ENCODE measurements at regions of chr5 and their contacts with region 1.

Region 1: DNA sequence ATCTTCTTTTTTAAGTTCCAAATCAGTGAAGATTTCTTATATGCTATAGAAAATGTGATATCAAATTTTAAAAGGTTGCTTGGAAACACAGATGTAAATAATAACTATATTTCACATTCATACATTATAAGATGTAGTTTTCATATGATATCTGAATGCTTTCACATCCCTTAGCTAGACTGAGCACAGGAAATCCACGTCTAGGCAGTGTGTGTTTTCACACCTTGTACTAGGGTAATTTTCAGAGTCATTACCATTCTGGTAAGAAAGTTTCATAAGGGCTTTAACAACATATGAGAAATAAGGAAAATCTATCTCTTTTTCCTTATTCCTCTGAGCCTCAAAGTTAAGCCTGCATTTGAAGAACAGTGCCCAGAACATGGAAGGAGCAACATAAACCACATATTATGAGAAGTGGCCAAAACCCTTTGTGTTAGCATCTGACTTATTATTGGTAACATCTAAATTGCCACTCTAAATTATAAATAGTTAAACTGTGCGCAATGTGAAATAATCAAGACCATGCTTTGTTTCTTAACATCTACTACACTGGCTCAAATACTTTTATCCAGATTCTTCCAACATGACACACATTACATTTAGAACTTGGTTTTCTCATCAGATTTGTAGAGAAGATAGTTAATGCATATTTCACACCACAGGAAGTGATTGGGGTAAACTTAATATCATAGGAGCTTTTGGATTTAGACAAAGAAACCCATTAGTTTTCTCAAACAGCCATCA is 113.3 kb downstream of the PPP2R2B start:
- DNase-seq: no peak
- H3K4me3 Mint-ChIP-seq: no peak overlapping the region
- H3K27ac Mint-ChIP-seq: no peak overlapping the region
- H3K4me1 Mint-ChIP-seq: no peaks in the 10 kb centered on the region
- H3K27me3 Mint-ChIP-seq: no peaks in the 10 kb centered on the region
- CTCF ChIP-seq: no peak

Region 2: GRCh38 chr5:146722361-146722791 is 42.9 kb before region 1 on chr5:
- CTCF ChIA-PET with region 1: no interaction called
- intact Hi-C with region 1: no loop called
- DNase-seq: no peak
- H3K4me3 Mint-ChIP-seq: no peak overlapping the region
- H3K27ac Mint-ChIP-seq: no peak overlapping the region
- H3K4me1 Mint-ChIP-seq: no peaks in the 10 kb centered on the region
- H3K27me3 Mint-ChIP-seq: no peaks in the 10 kb centered on the region
- CTCF ChIP-seq: no peak

Region 3: DNA sequence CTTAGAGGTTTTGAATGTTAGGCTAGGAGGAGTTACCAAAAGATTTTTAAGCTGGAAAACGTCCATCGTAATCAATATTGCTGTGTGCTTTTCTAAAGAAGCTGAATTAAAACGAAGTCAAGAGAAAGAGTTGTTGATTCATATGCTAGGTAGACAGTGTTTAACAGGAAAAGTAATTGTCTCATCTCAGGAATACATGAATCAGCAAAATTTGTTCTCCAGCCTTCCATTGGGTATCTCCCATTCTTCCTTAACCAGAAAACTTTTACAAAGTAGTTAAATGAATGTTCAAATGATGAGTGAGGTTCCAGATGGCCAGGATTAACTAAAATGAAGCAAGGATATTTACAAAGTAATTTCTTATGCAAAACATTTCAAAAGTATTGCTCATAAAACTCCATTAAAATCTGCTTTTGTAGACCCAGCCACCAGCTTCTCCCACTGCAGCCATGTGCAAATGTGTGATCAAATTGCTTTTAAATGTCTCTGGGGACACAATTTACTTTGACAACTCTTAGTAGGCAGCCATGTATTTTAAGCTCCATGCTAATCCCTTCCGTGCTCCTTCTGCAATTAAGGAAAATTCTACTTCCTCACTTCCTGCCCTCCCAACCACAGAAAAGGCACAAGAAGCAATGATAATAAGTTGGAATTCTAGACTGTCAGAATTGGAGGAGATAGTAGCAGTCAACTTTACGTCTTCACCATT is 1767.9 kb after region 1 on chr5:
- CTCF ChIA-PET with region 1: interaction called, 12 read pairs
- intact Hi-C with region 1: no loop called
- DNase-seq: no peak
- H3K4me3 Mint-ChIP-seq: no peak overlapping the region
- H3K27ac Mint-ChIP-seq: no peak overlapping the region
- H3K4me1 Mint-ChIP-seq: no peaks in the 10 kb centered on the region
- H3K27me3 Mint-ChIP-seq: peaks cover 86% of the 10 kb centered on the region
- CTCF ChIP-seq: no peak